ENCODE measurements at regions of chr12 and their contacts with region 1.

Region 1: GRCh38 chr12:68381476-68382219 is 49.5 kb upstream of the MDM1 start:
- DNase-seq: no peak
- CTCF ChIP-seq: no peak

Region 2: GRCh38 chr12:68267892-68268396 is 113.7 kb before region 1 on chr12:
- CTCF ChIA-PET with region 1: no interaction called
- POLR2A ChIA-PET with region 1: no interaction called
- DNase-seq: no peak
- CTCF ChIP-seq: no peak

Region 3: DNA sequence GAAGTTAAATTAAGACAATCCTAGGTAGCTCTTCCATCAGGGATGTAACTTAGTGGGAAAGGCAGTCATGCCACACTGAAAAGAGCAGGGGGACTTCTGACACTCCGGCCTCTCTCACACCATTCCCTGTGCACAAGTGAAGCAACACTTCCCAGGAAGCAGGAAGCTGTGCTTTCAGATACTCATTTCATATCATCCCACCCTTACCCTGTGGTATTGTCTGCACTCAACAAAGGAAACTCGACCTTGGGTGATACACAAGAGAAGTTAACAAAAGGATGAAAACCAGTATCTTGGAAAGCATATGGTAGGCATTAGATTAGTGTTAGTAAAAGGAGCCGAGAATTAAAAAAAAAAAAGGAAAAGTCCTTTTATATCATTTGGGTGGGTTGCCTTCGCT is 11.8 kb after region 1 on chr12:
- CTCF ChIA-PET with region 1: interaction called, 12 read pairs
- POLR2A ChIA-PET with region 1: interaction called, 4 read pairs
- DNase-seq: no peak
- CTCF ChIP-seq: no peak

Measured in GM10248 (cell line).